ENCODE measurements at regions of chr20 and their contacts with region 1.

Region 1: GRCh38 chr20:4720041-4720976 is 1.4 kb upstream of the PRND start:
- DNase-seq: peak; percentile 86
- H3K4me3 ChIP-seq: no peak overlapping the region
- H3K27ac ChIP-seq: no peak overlapping the region
- H3K4me1 ChIP-seq: peaks cover 0 to 3% of the 10 kb centered on the region in 2 experiments; a peak in 1 of 4 replicates
- H3K27me3 ChIP-seq: no peaks in the 10 kb centered on the region
- CTCF ChIP-seq: peak; percentile 86
- EP300 ChIP-seq: no peak
- RAD21 ChIP-seq: peak; percentile 90

Region 2: DNA sequence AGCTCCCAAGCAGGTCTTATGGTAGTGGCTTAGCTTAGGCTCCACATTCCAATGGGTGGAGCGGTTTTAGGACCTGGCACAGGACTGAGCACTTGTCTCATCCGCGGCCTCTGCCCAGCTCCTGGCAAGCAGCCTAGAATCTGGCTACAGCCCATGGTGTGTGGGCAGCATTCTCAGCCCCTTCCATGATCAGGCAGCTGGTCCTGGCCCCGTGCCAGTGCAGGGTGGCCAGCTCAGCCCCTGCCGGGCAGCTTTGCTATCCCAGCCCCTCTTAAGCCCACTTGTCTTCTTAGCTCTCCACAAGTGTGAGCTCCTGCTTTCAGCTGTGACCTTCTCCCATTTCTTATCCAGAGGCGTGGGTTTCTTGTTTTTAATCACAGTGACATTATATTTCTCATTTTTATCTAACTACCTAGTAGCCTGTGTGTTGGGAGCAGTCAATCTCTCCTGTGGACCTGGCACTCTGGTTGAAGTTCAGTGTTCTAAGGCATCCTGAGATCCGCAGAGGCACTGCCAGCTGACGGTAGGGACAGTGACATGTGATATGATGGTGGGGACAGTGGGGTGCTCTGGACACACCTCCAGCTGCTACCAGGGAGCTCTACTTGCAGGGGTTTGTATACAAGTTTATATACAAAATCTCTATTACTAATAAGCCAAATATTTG is 118.5 kb before region 1 on chr20:
- CTCF ChIA-PET with region 1: interaction called, 21 read pairs
- POLR2A ChIA-PET with region 1: no interaction called
- DNase-seq: peak; percentile 44
- H3K4me3 ChIP-seq: no peak overlapping the region
- H3K27ac ChIP-seq: peak overlapping the region in 1 of 2 experiments; percentile 41; a peak in 1 of 4 replicates
- H3K4me1 ChIP-seq: peaks cover 0 to 25% of the 10 kb centered on the region in 2 experiments; a peak in 3 of 4 replicates
- H3K27me3 ChIP-seq: no peaks in the 10 kb centered on the region
- CTCF ChIP-seq: no peak
- EP300 ChIP-seq: peak in 1 of 2 experiments; percentile 48; a peak in 1 of 4 replicates
- RAD21 ChIP-seq: no peak

Region 3: DNA sequence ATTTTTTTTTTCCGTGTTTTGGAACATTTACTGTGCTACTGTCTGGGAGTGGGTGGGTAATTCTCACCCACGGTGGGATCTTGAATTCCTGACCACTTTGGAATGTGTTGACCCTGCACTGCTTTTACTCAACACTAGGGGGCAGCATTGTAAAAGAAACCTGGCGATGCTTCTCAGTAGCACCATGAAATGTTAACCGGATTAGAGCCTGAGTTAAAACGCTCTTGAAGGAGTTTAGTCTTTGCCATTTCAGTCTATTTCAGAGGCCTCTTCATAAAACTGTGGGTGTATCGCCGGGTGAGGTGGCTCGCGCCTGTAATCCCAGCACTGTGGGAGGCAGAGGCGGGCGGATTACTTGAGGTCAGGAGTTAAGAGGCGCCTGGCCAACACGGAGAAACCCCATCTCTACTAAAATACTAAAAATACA is 113.0 kb before region 1 on chr20:
- CTCF ChIA-PET with region 1: interaction called, 32 read pairs
- POLR2A ChIA-PET with region 1: no interaction called
- DNase-seq: peak; percentile 70
- H3K4me3 ChIP-seq: no peak overlapping the region; a peak in 1 of 4 replicates
- H3K27ac ChIP-seq: no peak overlapping the region
- H3K4me1 ChIP-seq: peaks cover 0 to 8% of the 10 kb centered on the region in 2 experiments; a peak in 2 of 4 replicates
- H3K27me3 ChIP-seq: no peaks in the 10 kb centered on the region
- CTCF ChIP-seq: peak; percentile 96
- EP300 ChIP-seq: no peak
- RAD21 ChIP-seq: peak; percentile 94

Region 4: DNA sequence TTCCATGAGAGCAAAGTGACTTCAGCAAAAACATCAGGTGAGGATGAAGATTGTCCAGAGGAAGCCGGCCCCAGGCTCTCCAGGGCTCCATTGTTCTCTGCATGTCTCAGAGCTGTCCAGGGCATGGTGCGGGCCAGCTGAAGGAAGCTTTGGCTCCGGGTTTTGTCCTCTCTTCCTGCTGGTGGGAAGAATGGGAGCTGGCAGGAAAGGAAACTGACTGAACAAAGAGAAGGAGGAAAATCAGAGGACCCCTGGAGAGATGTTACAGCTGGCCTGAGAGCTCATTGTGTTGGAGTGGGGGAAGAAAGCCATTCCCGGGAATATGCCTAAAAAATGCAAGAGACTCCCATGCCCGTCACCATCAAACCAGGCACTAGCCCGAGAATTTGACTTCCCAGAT is 28.5 kb after region 1 on chr20:
- CTCF ChIA-PET with region 1: no interaction called
- POLR2A ChIA-PET with region 1: no interaction called
- DNase-seq: no peak
- H3K4me3 ChIP-seq: no peak overlapping the region
- H3K27ac ChIP-seq: no peak overlapping the region
- H3K4me1 ChIP-seq: no peaks in the 10 kb centered on the region
- H3K27me3 ChIP-seq: peaks cover 53% of the 10 kb centered on the region; the same call in 1 of the 2 replicates
- CTCF ChIP-seq: no peak
- EP300 ChIP-seq: no peak
- RAD21 ChIP-seq: no peak

Region 5: GRCh38 chr20:4774207-4774606 is 53.9 kb after region 1 on chr20:
- CTCF ChIA-PET with region 1: no interaction called
- POLR2A ChIA-PET with region 1: no interaction called
- DNase-seq: no peak
- H3K4me3 ChIP-seq: no peak overlapping the region
- H3K27ac ChIP-seq: no peak overlapping the region
- H3K4me1 ChIP-seq: no peaks in the 10 kb centered on the region
- H3K27me3 ChIP-seq: no peaks in the 10 kb centered on the region
- CTCF ChIP-seq: no peak
- EP300 ChIP-seq: no peak
- RAD21 ChIP-seq: no peak

Measured in SK-N-SH (cell line).